ENCODE measurements at regions of chr20 and their contacts with region 1.

Region 1: GRCh38 chr20:18066421-18067336 is 9.0 kb upstream of the OVOL2 start:
- DNase-seq: no peak
- H3K4me3 ChIP-seq: no peak overlapping the region
- H3K27ac ChIP-seq: no peak overlapping the region
- H3K4me1 ChIP-seq: no peaks in the 10 kb centered on the region
- H3K27me3 ChIP-seq: peaks cover 36% of the 10 kb centered on the region
- CTCF ChIP-seq: peak; percentile 39; the same call in 1 of the 2 replicates

Region 2: GRCh38 chr20:18276821-18277220 is 210.1 kb after region 1 on chr20:
- CTCF ChIA-PET with region 1: no interaction called
- POLR2A ChIA-PET with region 1: no interaction called
- intact Hi-C with region 1: loop called (anchors 2 kb)
- DNase-seq: peak; percentile 75
- H3K4me3 ChIP-seq: no peak overlapping the region
- H3K27ac ChIP-seq: no peak overlapping the region
- H3K4me1 ChIP-seq: no peaks in the 10 kb centered on the region
- H3K27me3 ChIP-seq: peaks cover 45% of the 10 kb centered on the region
- CTCF ChIP-seq: peak; percentile 92

Measured in A673 (cell line).